Activated CD8-positive, alpha-beta T cell treated with anti-CD3 and anti-CD28 coated beads, Interleukin-2, amount 10 ng/mL, durations not matched to agents 7 days and 5 days (primary cell): ENCODE measurements at regions of chr3 and their contacts with region 1.

Region 1: GRCh38 chr3:9362731-9363530 is at the start of gene THUMPD3:
- DNase-seq: peak; percentile 95
- ATAC-seq: peak; percentile 96
- H3K4me3 Mint-ChIP-seq: peak within 1 kb of the TSS; percentile 95
- H3K27ac Mint-ChIP-seq: peak within 1 kb of the TSS; percentile 99
- H3K4me1 Mint-ChIP-seq: peaks cover 35% of the 10 kb centered on the region
- H3K27me3 Mint-ChIP-seq: no peaks in the 10 kb centered on the region
- total RNA-seq, gene THUMPD3: 45.8 to 55.1 TPM

Region 2: DNA sequence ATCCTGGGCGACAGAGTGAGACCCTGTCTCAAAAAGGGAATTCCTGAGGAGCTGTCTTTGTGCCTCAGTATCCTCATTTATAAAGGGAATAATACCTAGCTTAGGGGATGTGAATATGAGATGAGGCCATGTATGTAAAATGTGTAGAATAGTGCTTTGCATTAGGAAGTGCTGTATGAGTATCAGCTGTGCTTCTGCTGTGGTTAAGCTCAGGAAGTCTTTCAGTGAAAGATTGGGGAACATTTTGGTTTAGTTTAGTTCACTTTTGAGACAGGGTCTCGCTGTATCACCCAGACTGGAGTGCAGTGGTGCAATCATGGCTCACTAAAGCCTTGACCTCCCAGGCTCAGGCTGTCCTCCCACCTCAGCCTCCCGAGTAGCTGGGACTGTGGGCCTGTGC is 10.5 kb after region 1 on chr3:
- CTCF ChIA-PET with region 1: interaction called, 5 read pairs
- POLR2A ChIA-PET with region 1: interaction called, 11 read pairs
- DNase-seq: no peak
- ATAC-seq: peak; percentile 57
- H3K4me3 Mint-ChIP-seq: peak overlapping the region; percentile 22
- H3K27ac Mint-ChIP-seq: peak overlapping the region; percentile 54
- H3K4me1 Mint-ChIP-seq: peaks cover 20% of the 10 kb centered on the region
- H3K27me3 Mint-ChIP-seq: no peaks in the 10 kb centered on the region

Region 3: DNA sequence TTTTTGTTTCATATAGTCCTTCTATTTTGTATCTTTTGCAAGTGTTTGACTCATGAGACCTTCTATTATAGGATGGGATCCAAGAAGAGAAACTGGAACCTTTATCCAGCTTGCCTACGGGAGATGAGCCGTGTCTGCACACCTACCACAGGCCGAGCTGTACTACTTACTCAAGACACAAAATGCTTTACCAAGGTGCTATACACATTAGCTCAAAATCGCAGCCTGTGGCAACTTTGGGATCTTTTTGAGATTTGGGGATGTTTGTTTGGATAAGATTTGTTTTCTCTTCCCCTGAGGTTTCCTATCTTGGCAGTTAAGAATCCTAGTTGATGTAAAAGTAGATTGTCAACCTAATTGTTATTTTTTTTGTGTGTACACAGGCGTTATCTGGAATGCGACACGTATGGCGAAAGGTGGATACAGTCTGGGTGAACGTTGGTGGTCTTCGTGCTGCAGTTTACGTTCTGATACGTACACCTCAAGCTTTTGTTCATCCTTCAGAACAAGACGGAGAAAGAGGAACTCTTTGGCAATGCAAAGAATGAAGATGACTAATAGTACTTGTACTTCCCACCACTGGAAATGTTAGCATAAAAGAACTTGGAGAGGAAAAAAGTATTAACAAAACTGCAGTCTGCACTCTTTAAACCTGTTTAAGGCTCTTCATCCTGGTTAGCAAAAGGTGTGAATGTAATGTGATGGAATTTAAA is 21.4 kb after region 1 on chr3:
- CTCF ChIA-PET with region 1: interaction called, 6 read pairs
- POLR2A ChIA-PET with region 1: interaction called, 11 read pairs
- DNase-seq: no peak
- ATAC-seq: no peak
- H3K4me3 Mint-ChIP-seq: no peak overlapping the region
- H3K27ac Mint-ChIP-seq: no peak overlapping the region
- H3K4me1 Mint-ChIP-seq: peaks cover 16% of the 10 kb centered on the region
- H3K27me3 Mint-ChIP-seq: no peaks in the 10 kb centered on the region